RWPE1 (cell line): ENCODE measurements at regions of chr20 and their contacts with region 1.

Region 1: DNA sequence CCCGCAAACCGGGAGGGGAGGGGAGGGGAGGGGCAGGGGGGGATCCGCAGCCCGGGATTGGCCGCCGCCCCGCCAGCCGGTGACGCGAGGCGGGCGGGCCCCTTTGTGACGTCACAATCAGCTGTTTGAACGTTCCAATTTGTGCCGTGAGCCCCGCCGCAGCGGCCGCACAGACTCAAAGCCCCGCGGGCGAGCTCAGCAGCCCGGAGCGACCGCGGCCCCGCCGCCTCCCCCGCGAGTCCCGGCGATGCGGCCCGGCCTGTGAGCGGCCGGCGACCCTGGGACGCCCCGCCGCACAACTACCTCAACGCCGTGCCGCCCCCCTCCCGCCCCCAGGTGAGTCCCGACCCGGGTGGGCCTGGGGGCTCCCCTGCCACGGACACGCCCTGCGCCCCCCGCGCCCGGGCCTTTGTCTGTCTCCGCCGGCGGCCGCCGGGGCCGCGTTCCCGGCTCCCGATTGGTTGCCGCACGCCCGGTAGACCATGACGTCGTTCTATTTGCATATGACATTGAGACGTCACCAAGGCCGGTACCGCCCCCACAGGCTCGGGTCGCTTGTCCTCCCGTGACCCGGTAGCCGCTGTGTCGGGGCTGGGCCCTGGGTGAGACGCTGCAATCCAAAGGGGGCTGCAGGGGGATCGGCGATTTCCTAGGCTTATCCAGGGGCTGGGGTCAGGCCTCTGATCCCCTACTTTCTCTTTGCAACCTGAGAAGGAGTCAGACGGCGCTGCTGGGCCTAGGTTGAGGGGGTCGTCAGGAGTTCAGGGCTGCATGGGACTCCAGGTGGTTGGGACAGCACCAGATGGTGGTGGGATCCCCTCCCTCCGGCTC is at the start of gene TP53INP2:
- DNase-seq: peak; percentile 94
- H3K27ac ChIP-seq: peak within 1 kb of the TSS; percentile 89
- CTCF ChIP-seq: no peak

Region 2: GRCh38 chr20:34579191-34579978 is 125.0 kb before region 1 on chr20:
- CTCF ChIA-PET with region 1: interaction called, 28 read pairs
- POLR2A ChIA-PET with region 1: no interaction called
- DNase-seq: peak; percentile 94
- H3K27ac ChIP-seq: peak overlapping the region; percentile 66
- CTCF ChIP-seq: peak; percentile 95